Sigmoid colon (tissue), 7 donors: ENCODE measurements at regions of chr16 and their contacts with region 1.

Region 1: GRCh38 chr16:31186176-31186575 is 6.2 kb downstream of the FUS start:
- DNase-seq: no peak
- H3K4me3 ChIP-seq: no peak overlapping the region
- H3K27ac ChIP-seq: no peak overlapping the region
- H3K4me1 ChIP-seq: peaks cover 0 to 34% (median 31%) of the 10 kb centered on the region in 4 donors
- H3K27me3 ChIP-seq: no peaks in the 10 kb centered on the region
- CTCF ChIP-seq: no peak
- EP300 ChIP-seq: no peak
- POLR2A ChIP-seq: no peak

Region 2: GRCh38 chr16:31093132-31093703 is 93.0 kb before region 1 on chr16:
- intact Hi-C with region 1: no loop called
- DNase-seq: no peak
- H3K4me3 ChIP-seq: peak overlapping the region; percentile 74 to 93 (median 81)
- H3K27ac ChIP-seq: peak overlapping the region; percentile 86 to 95 (median 94)
- H3K4me1 ChIP-seq: peaks cover 0 to 23% (median 16%) of the 10 kb centered on the region in 4 donors
- H3K27me3 ChIP-seq: no peaks in the 10 kb centered on the region
- CTCF ChIP-seq: no peak
- EP300 ChIP-seq: no peak
- POLR2A ChIP-seq: no peak

Region 3: GRCh38 chr16:31201582-31202413 is 15.6 kb after region 1 on chr16:
- intact Hi-C with region 1: loop called (anchors 2 kb)
- DNase-seq: no peak
- H3K4me3 ChIP-seq: peak overlapping the region; percentile 51 to 70 (median 58)
- H3K27ac ChIP-seq: peak overlapping the region; percentile 51 to 72 (median 66)
- H3K4me1 ChIP-seq: peaks cover 0 to 26% (median 19%) of the 10 kb centered on the region in 4 donors
- H3K27me3 ChIP-seq: peaks cover 0 to 11% (median 7%) of the 10 kb centered on the region in 3 donors
- CTCF ChIP-seq: no peak
- EP300 ChIP-seq: no peak
- POLR2A ChIP-seq: no peak